ENCODE measurements at regions of chr9 and their contacts with region 1.

Region 1: DNA sequence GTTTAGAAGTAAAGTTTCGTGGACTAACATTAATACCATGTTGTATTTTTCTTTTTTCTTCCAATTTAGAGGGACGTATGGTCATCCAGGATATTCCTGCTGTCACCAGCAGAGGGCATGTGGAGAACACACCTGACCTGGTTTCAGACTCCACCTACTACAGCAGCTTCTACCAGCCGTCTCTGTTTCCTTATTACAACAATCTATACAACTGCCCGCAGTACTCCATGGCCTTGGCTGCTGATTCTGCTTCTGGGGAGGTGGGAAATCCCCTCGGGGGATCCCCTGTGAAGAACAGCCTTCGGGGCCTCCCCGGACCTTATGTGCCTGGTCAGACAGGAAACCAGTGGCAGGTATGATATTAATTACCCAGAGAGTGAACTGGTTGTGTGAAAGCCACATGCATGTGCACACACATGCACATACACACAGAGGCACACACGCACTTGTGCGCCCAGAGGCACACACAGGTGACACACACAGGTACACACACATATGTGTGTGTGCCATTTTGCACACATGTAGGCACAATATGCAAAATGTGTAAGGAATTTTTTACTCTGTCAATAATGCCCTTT is 52.4 kb downstream of the DMRT1 start:
- DNase-seq: peak in 6 of 10 donors; percentile 12 to 83 (median 36)

Region 2: GRCh38 chr9:546797-547223 is 347.1 kb before region 1 on chr9:
- intact Hi-C with region 1: no loop called
- DNase-seq: peak in 2 of 10 donors; percentile 9 to 41

Region 3: DNA sequence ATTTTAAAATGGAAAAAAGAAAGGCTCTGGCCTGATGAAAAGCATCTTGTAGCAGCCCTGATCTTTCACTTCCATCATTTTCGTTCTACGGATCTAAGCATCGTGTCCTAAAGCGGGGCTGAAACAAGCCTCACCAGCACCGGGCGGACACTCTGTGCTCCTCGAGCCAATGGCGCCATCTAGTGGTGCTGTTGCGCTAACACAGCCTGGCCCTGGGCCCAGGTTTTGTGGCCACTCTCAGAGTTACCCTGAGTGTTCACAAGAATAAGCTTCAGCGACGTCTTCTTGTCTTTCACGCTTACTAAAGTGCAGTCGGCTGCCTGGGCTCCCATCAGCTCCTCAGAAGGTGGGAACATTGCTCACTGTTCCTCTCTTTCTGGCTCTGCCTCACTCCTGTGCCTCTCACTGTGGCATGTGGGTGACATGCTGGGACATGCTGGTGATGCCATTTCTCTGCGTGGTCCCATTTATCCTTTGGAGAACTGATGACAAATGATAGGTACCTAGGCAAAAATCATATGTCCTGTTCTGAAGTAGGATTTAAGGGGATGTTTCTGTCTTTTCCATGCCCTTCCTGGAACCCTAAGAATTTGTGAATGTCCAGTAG is 115.3 kb after region 1 on chr9:
- intact Hi-C with region 1: loop called (anchors 2 kb)
- DNase-seq: peak; percentile 67 to 97 (median 90)

Region 4: DNA sequence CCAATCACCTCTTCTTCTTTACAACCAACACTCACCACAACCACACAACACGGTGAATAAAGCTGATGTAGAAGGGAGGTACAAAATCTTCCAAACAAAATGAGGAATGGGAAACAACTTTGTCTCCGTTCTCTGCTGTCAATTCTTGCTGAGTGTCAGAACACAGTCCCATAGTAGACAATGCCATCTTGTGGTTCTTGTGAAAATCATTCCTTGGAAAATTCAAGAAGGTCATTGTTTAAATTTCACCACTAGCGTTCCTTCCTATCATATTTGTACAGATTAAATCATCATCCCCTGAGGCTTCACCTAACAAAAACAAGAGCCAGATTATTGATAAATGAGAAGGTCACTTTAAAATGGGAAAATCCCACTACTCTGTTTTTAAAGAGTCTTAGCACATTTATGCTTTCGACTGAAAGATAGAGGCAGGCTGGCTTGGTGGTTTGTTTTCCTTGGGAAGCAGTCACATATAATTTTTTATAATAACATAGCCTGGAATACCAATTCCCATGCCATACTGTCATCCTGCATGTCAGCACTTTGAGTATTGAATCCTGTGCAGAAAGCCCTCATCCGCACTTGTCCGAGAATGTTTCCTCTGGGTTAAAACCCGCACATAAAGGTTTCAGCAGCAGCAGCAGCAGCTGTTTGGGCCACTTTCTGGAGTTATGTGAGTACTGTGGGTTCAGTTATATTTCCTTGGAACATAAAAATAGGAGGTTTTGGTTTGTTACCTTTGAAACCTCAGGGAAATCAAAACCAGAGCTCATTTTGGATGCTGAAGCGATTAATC is 726.2 kb after region 1 on chr9:
- intact Hi-C with region 1: loop called (anchors 10 kb)
- DNase-seq: no peak

Measured in posterior cingulate gyrus (tissue), 11 donors.